ENCODE measurements at regions of chr6 and their contacts with region 1.

Region 1: DNA sequence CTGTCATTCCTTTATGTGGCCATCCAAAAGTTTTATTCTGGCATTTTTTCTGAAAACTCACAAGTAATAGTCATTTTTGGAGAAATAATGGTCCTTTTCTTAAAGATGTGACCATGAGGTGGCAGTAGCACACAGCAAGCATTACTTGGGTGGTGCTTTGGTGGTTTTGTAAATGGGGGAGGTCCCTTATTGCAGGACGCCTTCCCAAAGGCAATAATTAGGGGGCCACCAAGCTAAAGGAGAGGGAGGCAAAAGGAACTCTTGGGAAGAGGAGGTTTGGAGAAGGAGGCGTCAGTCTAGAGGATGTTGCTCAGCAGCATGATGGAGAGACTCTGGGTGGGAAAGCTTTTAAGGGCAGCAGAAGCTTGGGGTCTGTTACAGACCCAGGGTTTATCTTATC is 422.6 kb upstream of the MMS22L start:
- DNase-seq: no peak
- H3K4me3 Mint-ChIP-seq: no peak overlapping the region
- H3K27ac Mint-ChIP-seq: no peak overlapping the region
- H3K4me1 Mint-ChIP-seq: peaks cover 8% of the 10 kb centered on the region
- H3K27me3 Mint-ChIP-seq: no peaks in the 10 kb centered on the region
- CTCF ChIP-seq: peak; percentile 59

Region 2: GRCh38 chr6:97689078-97689754 is 16.4 kb before region 1 on chr6:
- CTCF ChIA-PET with region 1: no interaction called
- intact Hi-C with region 1: no loop called
- DNase-seq: no peak
- H3K4me3 Mint-ChIP-seq: no peak overlapping the region
- H3K27ac Mint-ChIP-seq: no peak overlapping the region
- H3K4me1 Mint-ChIP-seq: no peaks in the 10 kb centered on the region
- H3K27me3 Mint-ChIP-seq: no peaks in the 10 kb centered on the region
- CTCF ChIP-seq: no peak

Region 3: DNA sequence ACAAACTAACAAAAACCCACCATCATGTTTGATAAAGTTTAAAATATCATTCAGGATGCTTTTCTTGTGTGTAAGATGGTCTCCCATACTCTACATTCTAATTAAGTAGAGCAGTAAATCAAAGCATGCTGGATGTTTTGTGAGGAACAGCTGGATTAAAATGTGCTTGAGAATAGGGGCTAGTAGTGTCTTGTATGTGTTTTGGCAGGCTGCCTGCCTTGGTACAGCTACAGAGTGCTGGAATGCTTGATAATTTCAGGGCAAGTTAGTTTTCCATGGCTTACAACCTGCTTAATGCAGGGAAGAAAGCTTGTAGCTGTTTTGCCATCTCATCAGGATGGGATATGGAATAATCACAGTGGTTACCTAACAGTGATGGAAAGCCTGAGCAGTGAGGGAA is 214.1 kb after region 1 on chr6:
- CTCF ChIA-PET with region 1: no interaction called
- intact Hi-C with region 1: loop called (anchors 5 kb)
- DNase-seq: no peak
- H3K4me3 Mint-ChIP-seq: no peak overlapping the region
- H3K27ac Mint-ChIP-seq: no peak overlapping the region
- H3K4me1 Mint-ChIP-seq: no peaks in the 10 kb centered on the region
- H3K27me3 Mint-ChIP-seq: no peaks in the 10 kb centered on the region
- CTCF ChIP-seq: no peak

Region 4: DNA sequence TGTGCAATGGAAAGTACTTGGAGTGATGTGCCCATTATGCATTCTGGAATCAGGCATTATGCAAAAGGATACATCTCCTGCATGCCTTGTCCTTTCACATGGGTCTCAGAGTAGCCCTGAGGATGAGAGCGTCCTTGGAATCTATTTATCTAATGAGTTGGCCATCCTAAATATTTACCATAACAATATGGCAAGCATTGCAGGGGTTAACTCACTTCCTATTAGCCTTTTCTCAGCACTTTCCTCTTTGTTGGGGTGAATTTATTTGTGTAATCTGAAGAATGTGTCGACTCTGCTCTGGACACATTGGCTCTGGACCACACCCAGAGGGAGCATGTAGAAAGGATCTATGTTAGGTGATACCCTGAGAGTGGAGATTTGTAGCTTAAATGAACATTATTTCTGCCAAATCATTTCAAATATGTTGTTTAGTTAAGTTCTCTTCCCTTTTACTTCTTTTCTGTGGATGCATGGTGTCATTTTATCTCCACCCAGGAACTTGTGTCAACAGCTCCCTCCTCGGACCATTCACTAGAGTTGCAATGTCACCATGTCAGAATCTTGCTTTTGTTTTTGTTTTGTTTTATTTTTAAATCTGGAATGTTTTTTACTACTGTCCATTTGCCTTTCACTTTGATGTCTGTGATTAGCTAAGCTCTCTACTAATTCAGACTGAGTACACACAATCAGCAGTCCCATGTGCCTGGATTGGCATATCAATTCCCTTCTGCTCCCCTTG is 334.5 kb after region 1 on chr6:
- CTCF ChIA-PET with region 1: no interaction called
- intact Hi-C with region 1: loop called (anchors 1 kb)
- DNase-seq: no peak
- H3K4me3 Mint-ChIP-seq: no peak overlapping the region
- H3K27ac Mint-ChIP-seq: no peak overlapping the region
- H3K4me1 Mint-ChIP-seq: no peaks in the 10 kb centered on the region
- H3K27me3 Mint-ChIP-seq: no peaks in the 10 kb centered on the region
- CTCF ChIP-seq: no peak

Region 5: DNA sequence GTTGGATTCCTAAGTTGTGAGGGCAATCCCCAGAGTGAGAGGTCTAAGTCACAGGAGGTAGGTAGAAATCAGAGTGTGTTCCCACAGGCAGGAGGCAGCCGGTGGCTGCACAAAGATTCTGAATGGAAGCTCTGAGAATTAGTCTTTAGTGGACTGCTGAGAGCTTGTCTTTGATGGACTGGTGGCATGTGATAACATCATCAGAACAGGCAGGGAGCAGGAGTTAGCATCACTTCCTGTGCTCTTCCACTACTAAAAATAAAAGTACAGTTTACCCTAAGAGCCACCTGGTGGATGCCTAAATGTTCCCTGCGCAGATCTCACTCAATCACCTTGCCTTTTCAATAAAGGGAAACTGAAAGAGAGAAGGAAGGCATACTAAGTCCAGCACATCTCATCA is 834.2 kb after region 1 on chr6:
- CTCF ChIA-PET with region 1: no interaction called
- intact Hi-C with region 1: loop called (anchors 10 kb)
- DNase-seq: no peak
- H3K4me3 Mint-ChIP-seq: no peak overlapping the region
- H3K27ac Mint-ChIP-seq: no peak overlapping the region
- H3K4me1 Mint-ChIP-seq: no peaks in the 10 kb centered on the region
- H3K27me3 Mint-ChIP-seq: no peaks in the 10 kb centered on the region
- CTCF ChIP-seq: no peak

Region 6: GRCh38 chr6:98834060-98835031 is 1128.8 kb after region 1 on chr6 and contains the start of gene POU3F2:
- CTCF ChIA-PET with region 1: no interaction called
- intact Hi-C with region 1: loop called (anchors 5 kb)
- DNase-seq: peak; percentile 85
- H3K4me3 Mint-ChIP-seq: peak within 1 kb of the TSS; percentile 84
- H3K27ac Mint-ChIP-seq: peak within 1 kb of the TSS; percentile 52
- H3K4me1 Mint-ChIP-seq: peaks cover 20% of the 10 kb centered on the region
- H3K27me3 Mint-ChIP-seq: peaks cover 91% of the 10 kb centered on the region
- CTCF ChIP-seq: no peak
- total RNA-seq, gene POU3F2: 0.12 TPM in 1 of 2 replicates, not detected in the other

Measured in Calu3 (cell line).